ENCODE measurements at regions of chr22 and their contacts with region 1.

Region 1: DNA sequence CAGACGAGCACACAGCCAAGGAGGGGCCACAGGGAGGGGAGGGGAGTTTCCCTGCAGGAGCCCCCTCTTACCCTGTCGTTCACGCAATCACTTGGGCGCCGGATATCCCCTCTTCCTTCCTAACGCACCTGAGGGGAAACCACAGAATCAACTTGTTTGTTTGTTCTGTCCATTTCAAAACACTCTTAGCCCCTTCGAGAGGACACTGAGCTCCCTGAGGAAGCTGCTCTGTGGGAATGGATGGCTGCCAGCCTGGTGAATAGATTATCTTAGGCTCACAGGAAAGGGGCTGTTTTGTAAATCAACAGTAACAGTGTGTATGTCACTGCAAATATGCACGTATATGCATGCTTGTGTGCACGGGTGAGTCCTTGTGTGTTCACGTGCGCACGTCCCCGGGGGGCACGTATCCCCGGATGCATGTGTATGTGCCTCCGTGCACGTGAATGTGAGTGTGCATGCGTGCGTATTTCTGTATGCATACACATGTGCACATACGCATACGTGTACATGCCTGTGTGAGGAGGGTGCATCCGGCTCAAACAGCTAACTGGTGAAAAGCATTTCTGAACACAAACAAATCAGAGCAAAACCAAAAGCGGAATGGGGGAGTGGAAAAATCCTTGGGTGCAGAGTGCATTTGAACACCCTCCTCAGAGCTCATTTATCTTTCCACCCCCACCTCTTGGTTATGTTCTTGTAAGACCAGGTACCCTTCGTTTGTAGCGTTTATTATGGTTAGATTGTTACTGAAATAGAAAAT is 7.2 kb downstream of the ARSA start:
- H3K4me3 ChIP-seq: no peak overlapping the region
- H3K27ac ChIP-seq: no peak overlapping the region
- H3K4me1 ChIP-seq: peaks cover 7% of the 10 kb centered on the region; the same call in 1 of the 2 replicates
- CTCF ChIP-seq: no peak

Region 2: GRCh38 chr22:50507991-50508884 is 112.5 kb before region 1 on chr22 and contains the start of gene NCAPH2:
- CTCF ChIA-PET with region 1: interaction called, 10 read pairs
- POLR2A ChIA-PET with region 1: interaction called, 5 read pairs
- H3K4me3 ChIP-seq: peak within 1 kb of the TSS; percentile 100
- H3K27ac ChIP-seq: peak within 1 kb of the TSS; percentile 97
- H3K4me1 ChIP-seq: peaks cover 8% of the 10 kb centered on the region
- CTCF ChIP-seq: no peak

Region 3: DNA sequence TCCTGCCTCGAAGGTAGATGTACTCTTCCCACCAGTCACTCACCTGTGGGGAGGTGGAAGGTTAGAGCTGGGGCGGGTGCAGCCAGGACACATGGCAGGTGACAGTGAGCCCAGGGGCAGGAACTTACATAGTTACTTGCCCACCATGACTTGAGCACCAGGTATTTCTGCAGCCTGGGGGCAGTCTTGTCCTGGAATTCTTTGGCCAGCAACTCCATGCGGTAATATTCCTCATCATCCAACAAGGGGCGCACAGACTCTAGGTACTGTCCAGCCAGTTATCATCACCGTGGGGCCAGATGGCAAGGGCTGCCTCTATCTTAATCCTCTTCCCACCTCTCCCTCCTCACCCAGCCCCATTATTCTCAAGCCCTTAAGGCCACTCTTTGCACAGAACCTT is 44.7 kb before region 1 on chr22:
- CTCF ChIA-PET with region 1: interaction called, 24 read pairs
- POLR2A ChIA-PET with region 1: no interaction called
- H3K4me3 ChIP-seq: no peak overlapping the region
- H3K27ac ChIP-seq: no peak overlapping the region
- H3K4me1 ChIP-seq: no peaks in the 10 kb centered on the region
- CTCF ChIP-seq: peak; percentile 90

Region 4: GRCh38 chr22:50660306-50660705 is 39.5 kb after region 1 on chr22:
- CTCF ChIA-PET with region 1: no interaction called
- POLR2A ChIA-PET with region 1: no interaction called
- H3K4me3 ChIP-seq: no peak overlapping the region
- H3K27ac ChIP-seq: no peak overlapping the region
- H3K4me1 ChIP-seq: no peaks in the 10 kb centered on the region
- CTCF ChIP-seq: no peak

Region 5: GRCh38 chr22:50691521-50691920 is 70.7 kb after region 1 on chr22:
- CTCF ChIA-PET with region 1: interaction called, 10 read pairs
- POLR2A ChIA-PET with region 1: no interaction called
- H3K4me3 ChIP-seq: no peak overlapping the region
- H3K27ac ChIP-seq: no peak overlapping the region
- H3K4me1 ChIP-seq: no peaks in the 10 kb centered on the region
- CTCF ChIP-seq: 0 out of 2 replicates have a peak, but pooled peaks have one; percentile 40

Measured in HEK293 (cell line).